ENCODE measurements at regions of chr11 and their contacts with region 1.

Region 1: GRCh38 chr11:123407130-123407995 is 22.7 kb upstream of the GRAMD1B start:
- DNase-seq: peak; percentile 57
- H3K4me3 ChIP-seq: no peak overlapping the region
- H3K27ac ChIP-seq: no peak overlapping the region
- H3K4me1 ChIP-seq: peaks cover 0 to 11% of the 10 kb centered on the region in 2 experiments; a peak in 2 of 4 replicates
- H3K27me3 ChIP-seq: no peaks in the 10 kb centered on the region
- CTCF ChIP-seq: peak; percentile 81
- EP300 ChIP-seq: no peak
- RAD21 ChIP-seq: peak; percentile 87

Region 2: GRCh38 chr11:123145220-123145619 is 262.1 kb before region 1 on chr11:
- CTCF ChIA-PET with region 1: no interaction called
- POLR2A ChIA-PET with region 1: no interaction called
- DNase-seq: peak; percentile 66
- H3K4me3 ChIP-seq: peak overlapping the region; percentile 21 to 49; a peak in 3 of 4 replicates
- H3K27ac ChIP-seq: peak overlapping the region; percentile 87 to 95
- H3K4me1 ChIP-seq: peaks cover 9 to 17% of the 10 kb centered on the region in 2 experiments
- H3K27me3 ChIP-seq: no peaks in the 10 kb centered on the region
- CTCF ChIP-seq: no peak
- EP300 ChIP-seq: peak in 1 of 2 experiments; percentile 29; a peak in 1 of 4 replicates
- RAD21 ChIP-seq: no peak

Region 3: DNA sequence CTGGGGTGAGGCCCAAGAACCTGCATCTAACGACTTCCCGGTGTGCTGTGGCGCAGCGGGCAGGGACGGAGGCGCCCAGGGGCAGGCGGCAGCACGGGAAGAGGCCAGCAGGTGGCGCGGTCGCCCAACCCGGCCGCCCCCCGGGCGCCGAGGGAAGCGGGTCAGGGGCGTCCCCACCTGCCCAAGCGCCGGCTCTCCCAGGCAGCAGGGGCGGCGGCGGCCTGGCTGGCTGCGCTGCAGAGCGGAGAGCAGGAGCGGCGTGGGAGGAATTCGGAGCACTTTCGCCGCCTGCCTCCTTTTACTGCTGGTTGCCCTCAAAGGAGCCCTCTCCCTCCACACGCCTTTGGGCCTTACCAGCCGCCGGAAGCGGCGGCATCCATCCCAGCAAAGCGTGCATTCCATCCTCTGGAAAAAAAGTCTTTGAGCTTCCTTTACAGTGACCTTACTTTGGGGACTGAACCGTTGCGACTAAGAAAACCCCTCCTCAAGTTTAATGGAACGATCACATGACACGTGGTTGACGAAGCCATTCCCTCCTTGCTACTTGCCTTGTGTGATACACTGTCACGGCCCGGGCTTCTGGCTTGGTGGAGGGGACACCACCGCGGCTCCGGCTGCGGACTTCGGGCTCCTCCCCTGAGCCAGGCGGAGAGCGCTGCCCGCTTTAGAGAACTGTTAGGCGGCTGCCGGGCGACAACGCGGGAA is 105.5 kb before region 1 on chr11:
- CTCF ChIA-PET with region 1: interaction called, 16 read pairs
- POLR2A ChIA-PET with region 1: no interaction called
- DNase-seq: peak; percentile 94
- H3K4me3 ChIP-seq: peak overlapping the region; percentile 3 to 29; a peak in 2 of 4 replicates
- H3K27ac ChIP-seq: 0 out of 4 replicates have a peak overlapping the region, but pooled peaks of 1 of the 2 experiments have one; percentile 5
- H3K4me1 ChIP-seq: peaks cover 17 to 19% of the 10 kb centered on the region in 2 experiments; a peak in 3 of 4 replicates
- H3K27me3 ChIP-seq: no peaks in the 10 kb centered on the region
- CTCF ChIP-seq: peak; percentile 78
- EP300 ChIP-seq: no peak
- RAD21 ChIP-seq: peak; percentile 83

Region 4: GRCh38 chr11:123391646-123392348 is 15.6 kb before region 1 on chr11:
- CTCF ChIA-PET with region 1: interaction called, 20 read pairs
- POLR2A ChIA-PET with region 1: no interaction called
- DNase-seq: no peak
- H3K4me3 ChIP-seq: no peak overlapping the region
- H3K27ac ChIP-seq: no peak overlapping the region
- H3K4me1 ChIP-seq: peaks cover 0 to 15% of the 10 kb centered on the region in 2 experiments; a peak in 3 of 4 replicates
- H3K27me3 ChIP-seq: no peaks in the 10 kb centered on the region; the same call in 1 of the 2 replicates
- CTCF ChIP-seq: no peak
- EP300 ChIP-seq: no peak
- RAD21 ChIP-seq: no peak

Region 5: DNA sequence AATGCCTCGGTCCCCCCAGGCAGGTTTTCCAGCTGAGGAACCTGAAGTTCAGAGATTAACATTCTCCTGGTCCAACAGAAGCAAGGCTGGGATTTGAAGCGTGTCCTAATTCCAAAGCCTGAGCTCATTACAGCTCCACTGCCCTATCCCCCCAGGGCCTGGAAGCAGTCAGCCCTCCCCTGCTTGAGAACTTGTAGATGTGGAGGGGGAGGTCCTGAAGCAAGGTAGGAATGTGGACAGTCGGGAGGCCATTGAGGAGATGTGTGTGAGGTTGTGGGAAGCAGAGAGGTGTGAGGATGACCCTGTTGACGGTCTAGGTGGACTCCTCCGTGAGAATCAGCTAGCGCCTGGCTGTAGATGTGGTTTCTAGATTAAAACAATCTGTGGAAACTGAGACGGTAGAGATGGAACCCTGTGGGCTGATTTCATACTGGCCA is 30.8 kb after region 1 on chr11:
- CTCF ChIA-PET with region 1: interaction called, 10 read pairs
- POLR2A ChIA-PET with region 1: no interaction called
- DNase-seq: no peak
- H3K4me3 ChIP-seq: no peak overlapping the region
- H3K27ac ChIP-seq: peak overlapping the region in 1 of 2 experiments; percentile 27; a peak in 1 of 4 replicates
- H3K4me1 ChIP-seq: peaks cover 10 to 27% of the 10 kb centered on the region in 2 experiments; a peak in 3 of 4 replicates
- H3K27me3 ChIP-seq: no peaks in the 10 kb centered on the region
- CTCF ChIP-seq: no peak
- EP300 ChIP-seq: no peak
- RAD21 ChIP-seq: no peak

Region 6: DNA sequence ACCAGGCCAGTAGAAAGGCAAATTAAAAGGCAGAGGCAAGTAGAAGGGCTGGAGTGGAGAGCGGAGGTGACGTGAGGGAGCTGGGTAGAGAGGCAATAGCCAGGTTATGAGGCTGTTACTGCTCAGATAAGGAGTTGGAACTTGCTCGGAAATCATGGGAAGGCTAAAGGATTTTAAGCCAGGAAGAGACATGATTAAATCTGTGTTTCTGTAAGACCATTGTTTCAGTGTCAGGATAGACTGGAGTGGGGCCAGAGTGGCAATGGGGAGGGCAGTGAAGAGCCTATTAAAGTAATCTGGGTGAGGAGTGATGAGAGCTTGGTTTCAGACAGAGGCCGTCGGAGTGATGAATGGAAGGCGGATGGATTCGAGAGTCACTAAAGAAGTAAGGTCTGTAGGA is 61.7 kb after region 1 on chr11:
- CTCF ChIA-PET with region 1: interaction called, 198 read pairs
- POLR2A ChIA-PET with region 1: no interaction called
- DNase-seq: no peak
- H3K4me3 ChIP-seq: no peak overlapping the region
- H3K27ac ChIP-seq: no peak overlapping the region
- H3K4me1 ChIP-seq: peaks cover 0 to 16% of the 10 kb centered on the region in 2 experiments; a peak in 2 of 4 replicates
- H3K27me3 ChIP-seq: no peaks in the 10 kb centered on the region
- CTCF ChIP-seq: no peak
- EP300 ChIP-seq: no peak
- RAD21 ChIP-seq: no peak

Measured in SK-N-SH (cell line).